HepG2 (cell line): ENCODE measurements at regions of chr5 and their contacts with region 1.

Region 1: GRCh38 chr5:95822542-95823181 is at the start of gene GLRX:
- DNase-seq: peak; percentile 65
- ATAC-seq: peak; percentile 63
- H3K4me3 ChIP-seq: peak within 1 kb of the TSS; percentile 66 to 86 (median 81)
- H3K27ac ChIP-seq: peak within 1 kb of the TSS; percentile 89
- H3K4me1 ChIP-seq: peaks cover 87% of the 10 kb centered on the region
- H3K27me3 ChIP-seq: no peaks in the 10 kb centered on the region; a peak in 1 of 5 replicates
- CTCF ChIP-seq: no peak
- EP300 ChIP-seq: no peak
- POLR2A ChIP-seq: peak; percentile 82 to 95
- RAD21 ChIP-seq: no peak
- total RNA-seq, gene GLRX: 63.8 and 71.9 TPM in 2 replicates

Region 2: GRCh38 chr5:95646554-95647431 is 175.9 kb before region 1 on chr5 and contains the start of gene RFESD:
- CTCF ChIA-PET with region 1: no interaction called
- POLR2A ChIA-PET with region 1: interaction called, 31 read pairs
- in situ Hi-C with region 1: no loop called
- intact Hi-C with region 1: no loop called
- DNase-seq: peak; percentile 96
- ATAC-seq: peak; percentile 98
- H3K4me3 ChIP-seq: peak within 1 kb of the TSS; percentile 31 to 55 (median 39); a peak in 5 of 6 replicates
- H3K27ac ChIP-seq: peak within 1 kb of the TSS; percentile 90
- H3K4me1 ChIP-seq: peaks cover 55% of the 10 kb centered on the region
- H3K27me3 ChIP-seq: no peaks in the 10 kb centered on the region
- CTCF ChIP-seq: peak; percentile 56
- EP300 ChIP-seq: peak; percentile 18 to 53; a peak in 2 of 4 replicates
- POLR2A ChIP-seq: peak; percentile 65 to 85
- RAD21 ChIP-seq: peak; percentile 32; the same call in 1 of the 2 replicates
- total RNA-seq, gene RFESD: 1.2 and 2.2 TPM in 2 replicates

Region 3: DNA sequence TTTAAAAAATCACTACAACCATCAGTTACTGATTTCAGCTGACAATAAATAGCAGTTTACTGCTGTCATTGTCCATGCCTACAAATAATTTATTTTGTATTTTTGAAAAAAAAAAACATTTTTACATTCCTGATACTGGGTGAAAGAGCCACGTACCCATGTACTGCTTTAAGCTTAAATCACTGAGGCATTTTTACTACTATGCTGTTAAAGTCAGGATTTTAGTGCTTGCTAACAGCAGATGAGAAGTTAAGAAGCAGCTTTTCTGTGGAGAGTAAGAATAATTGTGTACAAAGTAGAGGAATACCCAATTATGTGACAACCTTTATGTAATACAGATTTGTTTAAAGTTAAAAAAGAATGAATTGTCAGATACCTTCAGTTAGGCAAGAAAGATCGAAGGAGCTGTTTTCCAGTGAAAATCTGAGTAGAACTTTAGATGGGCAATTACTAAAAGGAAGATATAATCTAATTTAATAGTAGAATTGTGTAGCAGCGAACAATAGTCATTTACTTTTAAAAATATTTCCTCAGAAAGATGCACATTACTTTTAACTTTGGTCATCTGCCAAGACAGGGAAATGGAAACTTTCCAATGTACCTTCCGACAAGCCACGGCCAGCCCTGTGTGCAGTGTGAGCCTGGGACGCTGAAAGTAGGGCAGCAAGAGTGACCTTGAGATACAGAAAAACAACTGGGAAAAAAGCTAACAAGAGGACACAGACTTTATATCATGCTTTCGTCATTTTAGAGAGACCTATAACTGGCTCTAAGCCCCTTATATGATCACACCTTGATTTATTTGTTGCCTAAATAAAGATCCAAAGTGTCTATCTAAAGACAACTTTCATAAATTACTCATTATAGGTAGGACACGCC is 51.6 kb before region 1 on chr5:
- CTCF ChIA-PET with region 1: no interaction called
- POLR2A ChIA-PET with region 1: interaction called, 16 read pairs
- in situ Hi-C with region 1: no loop called
- intact Hi-C with region 1: no loop called
- DNase-seq: peak; percentile 69
- ATAC-seq: peak; percentile 94
- H3K4me3 ChIP-seq: no peak overlapping the region
- H3K27ac ChIP-seq: peak overlapping the region; percentile 36
- H3K4me1 ChIP-seq: peaks cover 26% of the 10 kb centered on the region
- H3K27me3 ChIP-seq: no peaks in the 10 kb centered on the region
- CTCF ChIP-seq: no peak
- EP300 ChIP-seq: no peak; a peak in 1 of 4 replicates
- POLR2A ChIP-seq: no peak
- RAD21 ChIP-seq: no peak

Region 4: GRCh38 chr5:95803284-95804148 is 19.1 kb before region 1 on chr5:
- CTCF ChIA-PET with region 1: no interaction called
- POLR2A ChIA-PET with region 1: interaction called, 98 read pairs
- in situ Hi-C with region 1: no loop called
- intact Hi-C with region 1: loop called (anchors 1 kb)
- DNase-seq: peak; percentile 84
- ATAC-seq: peak; percentile 97
- H3K4me3 ChIP-seq: peak overlapping the region in 1 of 3 experiments; percentile 39; a peak in 2 of 6 replicates
- H3K27ac ChIP-seq: peak overlapping the region; percentile 76
- H3K4me1 ChIP-seq: peaks cover 72% of the 10 kb centered on the region
- H3K27me3 ChIP-seq: no peaks in the 10 kb centered on the region
- CTCF ChIP-seq: no peak
- EP300 ChIP-seq: peak in 1 of 2 experiments; percentile 24; a peak in 1 of 4 replicates
- POLR2A ChIP-seq: no peak
- RAD21 ChIP-seq: no peak

Region 5: DNA sequence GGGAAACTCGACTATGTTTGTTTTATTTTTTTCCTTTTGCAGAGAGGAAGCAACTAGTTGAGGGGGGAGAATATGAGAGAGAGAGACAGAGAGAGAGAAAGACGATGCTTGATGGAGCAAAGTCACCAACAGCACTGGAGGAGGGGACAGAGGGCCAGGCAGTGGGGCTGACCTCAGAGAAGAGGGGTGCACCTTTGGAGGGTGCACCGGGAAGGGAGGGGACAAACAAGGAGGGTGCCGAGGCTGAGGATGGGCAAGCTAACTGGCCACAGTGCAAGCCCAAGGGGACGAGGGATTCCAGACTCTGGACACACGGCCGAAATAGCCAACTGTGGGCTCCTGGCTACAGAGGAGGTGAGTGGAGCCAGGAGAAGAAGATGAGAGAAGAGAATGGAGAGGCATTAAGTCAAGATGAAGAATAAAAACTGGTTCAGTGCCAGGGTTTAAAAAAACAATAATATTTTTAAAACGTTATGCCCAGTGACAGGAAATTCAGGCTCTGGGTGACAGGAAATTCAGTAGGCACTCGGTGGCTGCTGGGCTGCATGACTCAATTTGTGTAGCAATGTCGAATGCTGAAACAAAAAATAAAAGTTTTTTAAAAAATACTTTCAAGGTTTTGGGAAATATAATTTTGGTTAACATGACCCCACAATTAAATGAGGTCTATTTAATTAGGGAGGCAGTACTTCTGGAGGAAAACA is 13.2 kb after region 1 on chr5:
- CTCF ChIA-PET with region 1: no interaction called
- POLR2A ChIA-PET with region 1: interaction called, 130 read pairs
- in situ Hi-C with region 1: no loop called
- intact Hi-C with region 1: loop called (anchors 1 kb)
- DNase-seq: no peak
- ATAC-seq: no peak
- H3K4me3 ChIP-seq: peak overlapping the region in 1 of 3 experiments; percentile 69; a peak in 1 of 6 replicates
- H3K27ac ChIP-seq: no peak overlapping the region
- H3K4me1 ChIP-seq: peaks cover 66% of the 10 kb centered on the region
- H3K27me3 ChIP-seq: no peaks in the 10 kb centered on the region
- CTCF ChIP-seq: no peak
- EP300 ChIP-seq: no peak
- POLR2A ChIP-seq: no peak
- RAD21 ChIP-seq: no peak

Region 6: GRCh38 chr5:95864944-95865504 is 42.4 kb after region 1 on chr5:
- CTCF ChIA-PET with region 1: no interaction called
- POLR2A ChIA-PET with region 1: interaction called, 18 read pairs
- in situ Hi-C with region 1: no loop called
- intact Hi-C with region 1: no loop called
- DNase-seq: peak; percentile 99
- ATAC-seq: peak; percentile 91
- H3K4me3 ChIP-seq: peak overlapping the region in 2 of 3 experiments; percentile 32 to 41; a peak in 3 of 6 replicates
- H3K27ac ChIP-seq: peak overlapping the region; percentile 98
- H3K4me1 ChIP-seq: peaks cover 72% of the 10 kb centered on the region
- H3K27me3 ChIP-seq: no peaks in the 10 kb centered on the region
- CTCF ChIP-seq: no peak
- EP300 ChIP-seq: peak; percentile 48 to 89; a peak in 2 of 4 replicates
- POLR2A ChIP-seq: peak; percentile 54 to 73; a peak in 3 of 4 replicates
- RAD21 ChIP-seq: no peak

Region 7: GRCh38 chr5:95892780-95893354 is 70.2 kb after region 1 on chr5:
- CTCF ChIA-PET with region 1: no interaction called
- POLR2A ChIA-PET with region 1: no interaction called
- in situ Hi-C with region 1: no loop called
- intact Hi-C with region 1: no loop called
- DNase-seq: peak; percentile 48
- ATAC-seq: peak; percentile 76
- H3K4me3 ChIP-seq: no peak overlapping the region
- H3K27ac ChIP-seq: no peak overlapping the region
- H3K4me1 ChIP-seq: peaks cover 53% of the 10 kb centered on the region
- H3K27me3 ChIP-seq: no peaks in the 10 kb centered on the region
- CTCF ChIP-seq: peak; percentile 59
- EP300 ChIP-seq: no peak
- POLR2A ChIP-seq: no peak
- RAD21 ChIP-seq: peak; percentile 72